Ascending aorta (tissue), 2 donors: ENCODE measurements at regions of chr11 and their contacts with region 1.

Region 1: DNA sequence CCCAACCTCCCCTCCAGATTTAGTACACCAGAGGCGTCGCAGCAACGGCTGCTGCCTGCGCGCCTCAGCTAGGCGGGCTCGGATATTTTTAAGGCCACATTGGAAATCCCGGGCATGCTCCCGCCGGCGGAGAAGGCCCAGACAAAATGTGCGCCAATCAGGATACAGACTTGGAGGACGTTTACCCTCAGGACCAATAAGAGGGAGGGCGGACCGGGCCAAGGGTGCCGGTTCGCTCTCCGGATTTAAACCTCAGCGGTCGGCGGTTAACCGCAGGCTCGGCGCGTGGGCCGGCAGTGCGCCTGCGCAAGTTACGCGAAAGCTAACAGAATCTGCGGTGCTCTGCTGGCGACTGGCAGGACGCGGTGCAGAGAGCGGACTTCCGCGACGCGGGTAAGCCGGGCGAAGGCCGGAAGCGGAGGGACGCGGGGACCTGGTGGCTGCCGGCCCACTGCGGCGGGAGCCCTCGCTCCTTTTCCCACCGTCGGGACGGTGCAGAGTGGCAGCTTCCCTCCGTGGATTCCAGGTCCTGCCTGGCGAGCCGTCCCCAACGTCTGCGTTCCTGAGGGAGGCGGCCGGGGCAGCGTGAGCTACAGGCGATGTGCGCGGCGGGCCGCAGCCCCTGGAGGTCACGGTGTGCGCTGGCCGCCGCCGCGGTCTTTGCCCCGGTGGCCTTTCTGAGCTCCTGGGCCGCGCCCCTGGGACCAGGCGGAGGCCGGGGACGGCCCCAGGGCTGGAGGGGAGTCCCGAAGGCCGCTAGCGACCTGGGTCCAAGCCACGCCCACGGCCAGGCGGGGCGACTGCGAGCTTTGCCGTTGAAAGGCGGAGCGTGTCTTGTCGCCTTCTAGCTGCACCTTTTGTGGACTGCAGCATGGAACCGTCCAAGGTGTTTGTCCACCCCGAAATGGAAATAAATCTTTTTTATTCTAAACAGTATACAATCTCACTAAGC is at the start of gene HYLS1:
- DNase-seq: peak; percentile 81 to 97
- H3K4me3 ChIP-seq: peak within 1 kb of the TSS; percentile 71 to 90
- H3K27ac ChIP-seq: peak within 1 kb of the TSS; percentile 91 to 98
- H3K4me1 ChIP-seq: peaks cover 2% of the 10 kb centered on the region in 2 donors
- H3K27me3 ChIP-seq: no peaks in the 10 kb centered on the region
- CTCF ChIP-seq: peak in 2 of 3 experiments; percentile 4 to 34
- total RNA-seq, gene HYLS1: 6.5 TPM

Region 2: GRCh38 chr11:124644426-124645280 is 1243.0 kb before region 1 on chr11:
- intact Hi-C with region 1: loop called (anchors 10 kb)
- DNase-seq: peak in 1 of 2 donors; percentile 79
- H3K4me3 ChIP-seq: peak overlapping the region in 1 of 2 donors; percentile 52
- H3K27ac ChIP-seq: peak overlapping the region; percentile 78 to 85
- H3K4me1 ChIP-seq: peaks cover 0 to 3% of the 10 kb centered on the region in 2 donors
- H3K27me3 ChIP-seq: no peaks in the 10 kb centered on the region
- CTCF ChIP-seq: peak; percentile 71 to 82 (median 75)

Region 3: DNA sequence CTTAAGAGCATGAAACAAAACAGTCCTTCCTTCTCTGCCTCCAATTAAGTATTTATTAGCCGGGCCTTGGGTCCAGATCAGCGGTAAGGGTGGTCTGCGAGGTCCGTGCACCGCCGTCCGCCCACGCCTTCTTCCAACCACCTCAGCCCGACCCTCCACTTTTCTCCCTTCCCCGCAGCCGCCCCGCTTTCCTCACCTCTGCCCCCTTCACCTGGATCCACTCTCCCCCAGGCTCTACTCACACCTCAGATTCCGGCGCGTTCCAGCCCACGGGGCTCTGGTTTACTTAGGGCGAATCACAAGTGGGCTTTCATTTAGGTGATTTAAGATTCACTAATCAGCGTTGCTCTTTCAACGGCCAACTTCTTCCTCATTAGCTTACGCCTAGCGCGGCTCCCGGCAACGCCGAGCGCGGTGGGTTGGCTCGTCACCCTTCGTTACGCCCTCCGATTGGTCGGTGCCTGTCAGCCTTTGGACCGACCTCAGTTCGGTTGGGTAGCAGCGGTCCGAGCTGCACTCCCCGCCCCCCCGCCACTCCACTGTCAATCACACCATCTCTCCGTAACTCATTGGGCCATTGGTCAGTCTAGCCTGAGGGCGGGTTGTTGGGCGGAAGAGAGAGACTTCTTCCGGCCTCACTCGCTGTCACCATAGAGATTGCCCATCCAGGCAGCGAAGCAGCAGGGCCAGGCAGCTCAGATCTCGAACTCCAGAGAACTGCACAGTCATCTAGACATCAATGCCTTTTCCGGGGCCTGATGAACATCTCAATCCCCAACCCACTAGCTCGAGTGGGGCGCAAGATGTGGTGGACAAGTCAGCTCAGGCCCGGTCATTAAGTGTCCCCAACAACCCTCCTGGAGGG is 776.1 kb before region 1 on chr11 and contains the start of gene TMEM218:
- intact Hi-C with region 1: loop called (anchors 5 kb)
- DNase-seq: peak; percentile 98 to 99
- H3K4me3 ChIP-seq: peak within 1 kb of the TSS; percentile 71 to 76
- H3K27ac ChIP-seq: peak within 1 kb of the TSS; percentile 69
- H3K4me1 ChIP-seq: peaks cover 0 to 4% of the 10 kb centered on the region in 2 donors
- H3K27me3 ChIP-seq: no peaks in the 10 kb centered on the region
- CTCF ChIP-seq: no peak
- total RNA-seq, gene TMEM218: 0.64 TPM

Region 4: DNA sequence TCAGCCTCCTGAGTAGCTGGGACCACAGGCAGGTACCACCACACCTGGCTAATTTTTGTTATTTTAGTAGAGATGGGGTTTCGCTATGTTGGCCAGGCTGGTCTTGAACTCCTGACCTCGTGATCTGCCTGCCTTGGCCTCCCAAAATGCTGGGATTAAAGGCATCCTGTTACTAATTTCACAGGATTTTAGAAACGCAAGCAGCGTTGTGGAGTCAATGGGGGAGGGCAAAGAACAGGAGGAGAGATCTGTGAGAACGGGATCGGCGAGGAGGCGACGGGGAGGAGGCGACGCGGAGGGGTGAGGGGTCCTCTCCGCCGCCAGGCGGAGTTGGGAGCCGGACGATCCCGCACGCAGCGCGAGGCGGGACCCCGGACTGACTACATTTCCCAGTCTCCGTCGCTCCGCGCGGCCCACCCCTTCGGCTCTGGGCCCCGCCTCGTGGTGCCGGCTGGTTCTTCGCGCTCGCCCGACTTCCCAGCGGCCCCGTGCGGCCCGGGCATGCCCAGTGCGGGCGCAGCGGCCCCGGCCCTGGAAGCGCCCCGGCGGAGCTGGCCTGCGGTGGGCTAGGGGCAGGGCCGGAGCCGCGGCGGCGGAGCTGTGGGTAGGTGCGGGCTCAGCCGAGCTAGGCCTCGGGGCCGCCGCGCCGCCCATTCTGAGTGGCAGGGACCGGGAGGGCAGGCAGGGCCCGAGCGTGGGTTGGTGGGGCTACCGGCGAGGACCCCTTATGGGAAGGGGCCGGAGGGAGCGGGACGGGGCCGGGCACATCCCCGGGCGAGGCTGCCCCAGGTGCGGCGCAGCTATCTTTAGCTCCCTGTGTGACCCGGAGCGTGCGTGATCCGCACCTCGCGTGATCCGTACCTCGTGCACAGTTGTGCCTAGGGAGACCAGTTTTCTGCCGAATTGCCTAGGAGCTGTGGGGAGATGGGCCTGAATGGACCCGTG is 318.4 kb before region 1 on chr11 and contains the start of gene EI24:
- intact Hi-C with region 1: loop called (anchors 5 kb)
- DNase-seq: peak; percentile 47 to 95
- H3K4me3 ChIP-seq: peak within 1 kb of the TSS; percentile 94 to 96
- H3K27ac ChIP-seq: peak within 1 kb of the TSS; percentile 83 to 84
- H3K4me1 ChIP-seq: peaks cover 5 to 16% of the 10 kb centered on the region in 2 donors
- H3K27me3 ChIP-seq: no peaks in the 10 kb centered on the region
- CTCF ChIP-seq: peak; percentile 60 to 74 (median 73)
- total RNA-seq, gene EI24: 111 TPM

Region 5: DNA sequence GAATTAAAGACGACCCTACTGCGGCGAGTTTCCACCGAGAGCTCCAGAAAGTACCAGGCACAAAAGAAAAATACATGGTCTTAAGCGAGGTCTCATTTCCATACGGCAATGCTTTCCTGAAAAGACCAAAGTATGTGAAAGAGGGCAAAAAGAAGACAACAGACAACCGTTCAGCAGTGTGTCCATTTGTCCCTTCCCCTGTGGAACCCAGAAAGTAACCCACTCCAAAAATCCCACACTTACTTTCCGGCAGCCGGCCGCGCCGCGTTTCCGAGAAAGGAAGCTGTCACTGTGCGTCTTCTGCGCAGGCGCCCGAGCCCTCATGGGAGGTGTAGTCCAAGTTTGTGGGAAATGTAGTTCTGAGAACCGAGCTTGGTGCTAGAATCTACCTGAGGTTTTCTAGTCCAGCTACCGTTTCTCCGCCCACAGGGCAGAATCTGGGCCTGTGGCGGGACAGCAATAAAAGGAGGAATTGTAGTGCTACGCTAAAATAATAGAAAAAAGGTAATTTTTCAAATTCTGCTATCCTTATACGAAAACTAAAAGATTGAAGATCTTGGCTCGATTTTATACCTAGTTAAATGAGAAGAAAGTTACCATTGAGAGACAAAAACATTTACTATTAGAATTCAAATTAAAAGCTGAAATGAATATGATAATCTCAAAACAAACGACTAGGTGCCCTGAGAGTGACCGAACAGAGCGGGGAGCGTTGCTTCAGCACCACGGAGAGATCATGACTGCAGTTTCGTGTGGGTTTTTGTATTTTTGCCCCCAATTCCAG is 15.5 kb after region 1 on chr11 and contains the start of gene PUS3:
- intact Hi-C with region 1: loop called (anchors 1 kb)
- DNase-seq: peak; percentile 62 to 95
- H3K4me3 ChIP-seq: peak within 1 kb of the TSS; percentile 61 to 63
- H3K27ac ChIP-seq: peak within 1 kb of the TSS; percentile 66 to 83
- H3K4me1 ChIP-seq: peaks cover 2 to 8% of the 10 kb centered on the region in 2 donors
- H3K27me3 ChIP-seq: peaks cover 5% of the 10 kb centered on the region
- CTCF ChIP-seq: no peak
- total RNA-seq, gene PUS3: 31.3 TPM

Region 6: GRCh38 chr11:126115816-126116331 is 228.2 kb after region 1 on chr11:
- intact Hi-C with region 1: loop called (anchors 5 kb)
- DNase-seq: peak; percentile 59 to 85
- H3K4me3 ChIP-seq: no peak overlapping the region
- H3K27ac ChIP-seq: peak overlapping the region; percentile 74 to 76
- H3K4me1 ChIP-seq: peaks cover 20 to 44% of the 10 kb centered on the region in 2 donors
- H3K27me3 ChIP-seq: no peaks in the 10 kb centered on the region
- CTCF ChIP-seq: peak in 1 of 3 experiments; percentile 22

Region 7: DNA sequence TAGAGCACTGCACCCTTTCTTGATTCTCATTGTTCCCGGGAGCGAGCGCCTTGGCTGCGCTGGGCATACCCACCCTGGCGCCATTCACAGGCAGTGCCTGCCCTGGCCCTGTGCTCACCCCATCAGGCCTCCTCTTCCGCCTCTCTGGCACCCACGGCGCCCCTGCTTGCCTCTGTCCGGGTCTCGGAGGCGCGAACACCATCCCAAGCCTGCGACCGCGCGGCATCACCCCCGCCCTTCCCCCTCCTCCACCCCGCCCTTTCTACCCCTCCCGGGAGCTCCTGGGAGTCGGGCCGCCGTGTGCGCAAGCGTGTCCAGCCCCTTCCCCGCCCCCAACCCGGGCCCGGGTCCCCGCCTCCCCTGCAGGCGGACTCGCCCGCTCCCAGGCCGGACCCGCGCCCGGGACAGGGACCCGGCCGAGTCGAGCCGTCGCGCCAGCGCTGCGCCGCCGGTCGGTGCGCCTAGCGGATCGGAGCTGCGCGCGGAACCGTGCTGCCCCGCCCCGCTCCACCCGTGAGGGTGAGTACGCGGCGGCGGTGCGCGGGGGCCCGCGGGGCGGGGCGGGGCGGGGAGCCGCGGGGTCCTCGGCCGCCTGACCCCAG is 467.8 kb after region 1 on chr11 and contains the start of gene ST3GAL4:
- intact Hi-C with region 1: loop called (anchors 5 kb)
- DNase-seq: peak in 1 of 2 donors; percentile 83
- H3K4me3 ChIP-seq: peak within 1 kb of the TSS; percentile 84 to 88
- H3K27ac ChIP-seq: peak within 1 kb of the TSS; percentile 80 to 86
- H3K4me1 ChIP-seq: peaks cover 22 to 53% of the 10 kb centered on the region in 2 donors
- H3K27me3 ChIP-seq: no peaks in the 10 kb centered on the region
- CTCF ChIP-seq: no peak
- total RNA-seq, gene ST3GAL4: 61.4 TPM